Naive thymus-derived CD4-positive, alpha-beta T cell (primary cell): ENCODE measurements at regions of chr9 and their contacts with region 1.

Region 1: GRCh38 chr9:38346811-38347210 is 45.7 kb upstream of the ALDH1B1 start:
- DNase-seq: no peak
- ATAC-seq: no peak
- H3K4me3 ChIP-seq: no peak overlapping the region
- H3K4me3 Mint-ChIP-seq: no peak overlapping the region
- H3K27ac ChIP-seq: no peak overlapping the region
- H3K27ac Mint-ChIP-seq: no peak overlapping the region
- H3K4me1 ChIP-seq: no peaks in the 10 kb centered on the region
- H3K4me1 Mint-ChIP-seq: peaks cover 0 to 6% (median 0%) of the 10 kb centered on the region in 7 donors
- H3K27me3 ChIP-seq: no peaks in the 10 kb centered on the region
- H3K27me3 Mint-ChIP-seq: peaks cover 0 to 27% (median 11%) of the 10 kb centered on the region in 5 donors

Region 2: GRCh38 chr9:38284588-38285051 is 62.2 kb before region 1 on chr9:
- CTCF ChIA-PET with region 1: no interaction called
- POLR2A ChIA-PET with region 1: no interaction called
- intact Hi-C with region 1: loop called in 1 of 2 experiments (anchors 10 kb)
- DNase-seq: no peak
- ATAC-seq: no peak
- H3K4me3 ChIP-seq: no peak overlapping the region
- H3K4me3 Mint-ChIP-seq: no peak overlapping the region
- H3K27ac ChIP-seq: no peak overlapping the region
- H3K27ac Mint-ChIP-seq: no peak overlapping the region
- H3K4me1 ChIP-seq: no peaks in the 10 kb centered on the region
- H3K4me1 Mint-ChIP-seq: peaks cover 0 to 4% (median 0%) of the 10 kb centered on the region in 7 donors
- H3K27me3 ChIP-seq: no peaks in the 10 kb centered on the region
- H3K27me3 Mint-ChIP-seq: peaks cover 0 to 6% (median 0%) of the 10 kb centered on the region in 5 donors